ENCODE measurements at regions of chr5 and their contacts with region 1.

Region 1: DNA sequence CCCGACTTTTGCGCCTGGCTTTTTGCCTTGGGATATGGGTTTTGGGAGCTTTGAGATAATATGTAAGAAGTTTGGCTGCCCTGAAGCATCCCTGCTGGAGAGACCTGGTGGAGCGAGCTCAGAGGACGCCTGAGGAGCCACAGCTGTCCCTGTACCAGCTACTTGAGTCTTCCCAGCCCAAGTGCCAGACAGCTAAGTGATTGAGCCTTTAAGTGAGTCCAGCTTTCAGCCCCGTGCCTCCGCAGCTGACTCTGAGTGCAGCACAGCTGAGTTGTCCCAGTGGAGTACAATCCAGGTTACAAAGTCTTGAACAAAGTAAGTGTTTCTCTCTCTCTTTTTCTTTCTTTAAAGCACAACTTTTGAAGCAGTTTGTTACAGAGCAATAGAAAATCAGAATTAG is 203.8 kb upstream of the DAP start:
- DNase-seq: no peak
- ATAC-seq: no peak
- H3K4me3 ChIP-seq: no peak overlapping the region
- H3K4me1 ChIP-seq: no peaks in the 10 kb centered on the region
- CTCF ChIP-seq: no peak

Region 2: DNA sequence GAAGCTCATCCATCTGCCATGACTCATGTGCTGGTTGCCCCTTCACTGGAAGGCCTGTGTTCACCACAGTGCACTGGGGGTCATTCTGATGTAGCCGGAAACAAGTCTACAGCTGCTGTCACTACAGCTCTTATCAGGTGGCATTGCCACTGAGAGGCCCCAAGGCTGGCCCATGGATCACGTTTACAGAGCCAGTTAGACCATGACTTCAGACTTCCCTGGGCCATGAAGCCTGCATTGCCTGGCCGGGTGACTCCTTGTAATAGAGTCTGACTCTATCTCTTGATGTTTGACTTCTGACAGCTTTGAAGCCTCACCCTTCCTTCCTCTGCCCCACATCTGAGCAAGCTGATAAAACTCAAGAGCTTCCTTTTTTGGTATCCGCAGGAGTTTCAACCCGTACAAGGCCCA is 269.7 kb after region 1 on chr5:
- intact Hi-C with region 1: no loop called
- DNase-seq: peak in 1 of 3 donors; percentile 5
- ATAC-seq: peak; percentile 35
- H3K4me3 ChIP-seq: no peak overlapping the region
- H3K4me1 ChIP-seq: no peaks in the 10 kb centered on the region
- CTCF ChIP-seq: no peak

Region 3: DNA sequence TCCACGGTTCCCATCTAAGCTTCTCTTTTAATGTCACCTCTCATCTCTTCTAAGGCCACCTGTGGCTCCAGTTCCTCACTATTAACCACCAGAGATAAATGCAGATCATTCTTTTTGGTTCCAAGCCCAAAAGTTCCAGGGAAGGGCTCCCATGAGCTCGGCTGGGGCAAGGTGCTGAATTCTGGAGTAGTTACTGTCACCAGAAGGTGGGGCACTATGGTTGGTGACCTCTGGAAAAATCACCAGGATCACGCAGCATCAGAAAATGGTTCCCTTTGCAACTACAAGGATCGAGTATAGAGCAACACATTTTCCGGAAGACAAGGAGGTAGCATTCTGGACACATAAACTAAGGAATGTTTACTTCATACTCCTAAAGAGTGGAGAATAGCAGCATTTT is 324.9 kb after region 1 on chr5:
- intact Hi-C with region 1: no loop called
- DNase-seq: no peak
- ATAC-seq: no peak
- H3K4me3 ChIP-seq: no peak overlapping the region
- H3K4me1 ChIP-seq: peaks cover 8% of the 10 kb centered on the region
- CTCF ChIP-seq: no peak

Region 4: DNA sequence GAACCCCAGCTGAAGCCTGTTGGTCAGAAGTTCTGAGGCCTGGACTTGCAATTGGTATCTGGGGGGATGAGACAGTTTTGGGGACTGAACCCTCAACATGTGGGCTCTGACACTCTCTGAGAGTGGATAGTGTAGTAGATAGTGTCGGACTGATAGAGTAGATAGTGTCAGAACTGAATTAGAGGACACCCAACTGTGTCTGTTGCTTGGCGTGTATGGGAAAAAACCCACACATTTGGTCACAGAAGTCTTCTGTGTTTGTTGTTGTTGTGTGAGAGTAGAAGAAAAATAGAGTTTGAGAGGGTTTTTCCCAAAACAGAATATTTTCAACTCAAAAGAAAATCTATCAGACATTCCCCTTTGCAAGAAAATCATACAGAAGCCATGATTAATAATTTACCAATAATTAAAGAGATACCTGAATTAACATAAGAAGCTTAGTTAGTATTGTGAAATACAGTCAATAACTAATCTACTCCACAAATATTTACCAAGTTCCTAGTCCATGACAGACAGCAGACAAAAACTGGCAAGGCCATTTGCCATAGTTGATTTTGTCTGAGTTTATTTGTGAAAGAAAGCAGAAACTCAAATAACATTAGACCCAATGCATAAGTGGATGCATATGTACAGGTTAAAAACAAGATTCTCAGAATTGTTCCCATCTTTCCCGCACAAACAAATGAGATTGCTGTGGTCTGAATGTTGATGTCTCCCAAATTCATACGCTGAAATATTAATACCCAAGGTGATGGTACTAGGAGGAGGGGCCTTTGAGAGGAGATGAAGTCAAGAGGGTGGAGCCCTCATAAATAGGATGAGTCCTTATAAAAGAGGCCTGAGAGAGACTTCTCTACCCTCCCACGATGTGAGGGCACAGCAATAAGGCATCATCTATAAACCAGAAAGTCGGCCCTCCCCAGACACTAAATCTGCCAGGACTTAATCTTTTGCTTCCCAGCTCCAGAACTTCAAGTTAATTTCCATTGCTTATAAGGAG is 768.7 kb after region 1 on chr5:
- intact Hi-C with region 1: no loop called
- DNase-seq: no peak
- ATAC-seq: no peak
- H3K4me3 ChIP-seq: no peak overlapping the region
- H3K4me1 ChIP-seq: no peaks in the 10 kb centered on the region
- CTCF ChIP-seq: no peak

Region 5: GRCh38 chr5:11822601-11823000 is 857.8 kb after region 1 on chr5:
- intact Hi-C with region 1: loop called in 1 of 2 experiments (anchors 10 kb)
- DNase-seq: no peak
- ATAC-seq: no peak
- H3K4me3 ChIP-seq: no peak overlapping the region
- H3K4me1 ChIP-seq: no peaks in the 10 kb centered on the region
- CTCF ChIP-seq: no peak

Measured in mucosa of descending colon (tissue), 3 donors.